ENCODE measurements at regions of chr3 and their contacts with region 1.

Region 1: DNA sequence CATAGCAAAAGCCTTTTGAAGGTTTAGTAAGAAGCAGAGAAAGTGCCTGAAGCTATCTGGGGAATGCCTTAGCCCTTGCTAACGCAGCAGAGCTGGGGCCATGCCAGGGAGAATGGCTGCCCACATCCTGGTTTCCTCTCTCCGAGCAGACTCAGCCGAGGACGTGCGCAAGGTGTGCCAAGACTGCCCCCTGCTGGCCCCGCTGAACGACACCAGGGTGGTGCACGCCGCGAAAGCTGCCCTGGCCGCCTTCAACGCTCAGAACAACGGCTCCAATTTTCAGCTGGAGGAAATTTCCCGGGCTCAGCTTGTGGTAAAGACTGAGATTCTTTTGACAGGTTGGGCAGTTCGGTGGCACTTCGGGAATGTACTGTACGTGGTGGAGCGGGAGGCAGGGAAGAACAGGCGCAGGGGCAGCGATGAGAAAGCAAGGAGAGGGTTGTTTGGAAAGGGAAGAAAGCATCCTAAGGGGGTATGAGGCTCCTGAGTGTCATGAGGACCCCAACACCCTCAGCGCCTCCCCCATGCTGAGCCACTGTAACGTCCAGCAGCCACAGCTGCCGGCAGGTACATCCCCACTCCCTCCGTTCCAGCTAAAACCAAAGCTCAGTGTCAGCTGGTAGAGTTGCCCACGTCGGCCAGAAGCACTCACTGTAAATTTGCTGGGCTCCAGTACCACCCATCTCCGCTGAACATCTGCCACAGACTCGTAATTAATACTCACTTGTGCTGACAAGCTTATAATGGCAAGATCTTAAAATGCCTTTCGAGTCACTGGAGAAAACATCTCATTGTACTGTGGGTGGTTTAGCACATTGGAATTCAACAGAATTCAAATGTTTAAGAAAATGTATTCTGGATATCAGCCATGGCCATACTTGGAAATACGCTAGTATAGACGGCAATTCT is 4.4 kb downstream of the AHSG start:
- DNase-seq: peak; percentile 73 to 91 (median 82)
- H3K4me3 ChIP-seq: peak overlapping the region; percentile 4 to 60 (median 46)
- H3K27ac ChIP-seq: peak overlapping the region in 37 of 59 donors; percentile 1 to 76 (median 42)
- H3K27me3 ChIP-seq: no peaks in the 10 kb centered on the region
- CTCF ChIP-seq: peak; percentile 64 to 96 (median 89)

Region 2: GRCh38 chr3:185976977-185977678 is 640.2 kb before region 1 on chr3:
- intact Hi-C with region 1: loop called in 1 of 2 experiments (anchors 5 kb)
- DNase-seq: peak; percentile 75 to 93 (median 88)
- H3K4me3 ChIP-seq: no peak overlapping the region
- H3K27ac ChIP-seq: no peak overlapping the region
- H3K27me3 ChIP-seq: no peaks in the 10 kb centered on the region
- CTCF ChIP-seq: peak; percentile 78 to 97 (median 92)

Region 3: DNA sequence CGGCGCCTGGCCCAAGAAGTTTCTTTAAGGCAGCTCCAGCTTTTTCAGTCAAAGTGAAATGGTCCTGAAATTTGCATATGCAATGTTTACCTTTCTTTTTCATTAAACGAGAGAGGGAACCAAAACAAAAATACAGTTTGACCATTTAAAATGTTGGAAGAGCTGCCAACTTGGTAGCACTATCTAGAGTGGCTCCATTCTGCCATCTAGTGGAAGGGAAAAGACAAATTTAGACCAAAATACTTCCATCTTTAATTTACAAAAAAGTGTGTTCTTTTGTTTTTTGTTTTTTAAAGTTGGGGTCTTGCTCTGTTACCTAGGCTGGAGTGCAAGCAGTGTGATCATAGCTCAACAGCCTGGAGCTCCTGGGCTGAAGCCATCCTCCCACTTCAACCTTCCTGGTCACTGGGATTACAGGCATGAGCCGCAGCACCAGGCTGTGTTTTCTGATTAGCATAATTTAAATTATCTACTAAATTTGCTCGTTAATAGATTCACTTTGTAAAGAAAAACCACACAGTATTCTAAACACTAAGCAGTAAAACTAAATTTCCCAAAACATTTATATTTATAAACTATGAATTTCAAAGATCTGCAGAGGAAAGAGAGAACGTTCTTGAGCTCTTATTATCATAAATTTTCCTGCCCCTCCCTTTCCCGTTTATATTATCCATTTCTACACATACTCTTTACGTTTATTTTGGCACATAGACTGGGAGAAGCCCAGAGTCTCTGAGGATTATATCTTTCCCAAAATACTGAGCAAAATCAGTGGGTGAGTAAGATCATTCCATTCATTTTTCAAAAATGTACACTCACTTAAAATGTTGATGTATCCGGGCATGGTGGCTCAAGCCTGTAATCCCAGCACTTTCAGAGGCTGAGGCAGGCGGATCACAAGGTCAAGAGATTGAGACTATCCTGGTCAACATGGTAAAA is 204.4 kb after region 1 on chr3:
- intact Hi-C with region 1: loop called (anchors 2 kb)
- DNase-seq: no peak
- H3K4me3 ChIP-seq: peak overlapping the region in 2 of 59 donors; percentile 13 to 14
- H3K27ac ChIP-seq: peak overlapping the region in 1 of 59 donors; percentile 9
- H3K27me3 ChIP-seq: no peaks in the 10 kb centered on the region
- CTCF ChIP-seq: peak in 55 of 56 donors; percentile 40 to 84 (median 69)

Region 4: DNA sequence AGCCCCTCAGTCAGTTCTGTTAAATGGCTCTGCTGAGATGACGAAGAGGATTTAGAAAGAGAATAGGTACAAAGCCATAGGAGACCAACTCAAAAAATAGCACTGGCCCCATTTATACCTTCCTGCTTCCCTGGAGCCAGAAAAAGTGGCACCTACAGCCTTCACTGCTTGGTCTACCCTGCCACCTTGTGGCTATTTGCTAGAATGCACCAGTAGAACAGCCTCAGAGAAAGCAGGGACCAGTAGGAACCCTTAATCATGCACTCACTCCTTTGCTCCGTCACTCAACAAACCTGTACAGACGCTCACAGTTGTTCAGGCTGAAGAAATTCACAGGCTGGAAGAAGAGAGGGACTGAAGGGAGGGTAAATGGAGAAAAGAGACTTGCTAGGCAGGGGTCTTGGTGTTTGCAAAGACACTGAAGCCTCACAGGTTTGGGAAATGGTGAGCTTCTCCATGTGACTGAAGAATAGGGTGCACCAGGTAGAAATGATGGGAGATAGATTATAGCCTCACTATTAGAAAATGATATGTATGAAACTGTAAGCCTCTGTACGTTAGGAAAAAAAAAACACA is 1097.2 kb after region 1 on chr3:
- intact Hi-C with region 1: loop called in 1 of 2 experiments (anchors 5 kb)
- DNase-seq: peak in 8 of 10 donors; percentile 62 to 81 (median 70)
- H3K4me3 ChIP-seq: no peak overlapping the region
- H3K27ac ChIP-seq: no peak overlapping the region
- H3K27me3 ChIP-seq: no peaks in the 10 kb centered on the region
- CTCF ChIP-seq: peak; percentile 68 to 98 (median 92)